Activated CD8-positive, alpha-beta T cell treated with anti-CD3 and anti-CD28 coated beads, Interleukin-2, amount 10 ng/mL, durations not matched to agents 7 days and 5 days (primary cell): ENCODE measurements at regions of chr22 and their contacts with region 1.

Region 1: GRCh38 chr22:35921777-35922176 is 106.8 kb downstream of the RBFOX2 start:
- DNase-seq: peak; percentile 59
- ATAC-seq: peak; percentile 69
- H3K4me3 Mint-ChIP-seq: no peak overlapping the region
- H3K27ac Mint-ChIP-seq: no peak overlapping the region
- H3K4me1 Mint-ChIP-seq: peaks cover 3% of the 10 kb centered on the region
- H3K27me3 Mint-ChIP-seq: peaks cover 8% of the 10 kb centered on the region

Region 2: GRCh38 chr22:35627264-35628041 is 294.3 kb before region 1 on chr22:
- CTCF ChIA-PET with region 1: interaction called, 13 read pairs
- POLR2A ChIA-PET with region 1: no interaction called
- DNase-seq: peak; percentile 66
- ATAC-seq: peak; percentile 48
- H3K4me3 Mint-ChIP-seq: peak overlapping the region; percentile 74
- H3K27ac Mint-ChIP-seq: peak overlapping the region; percentile 53
- H3K4me1 Mint-ChIP-seq: peaks cover 25% of the 10 kb centered on the region
- H3K27me3 Mint-ChIP-seq: peaks cover 8% of the 10 kb centered on the region

Region 3: GRCh38 chr22:36010882-36011281 is 89.1 kb after region 1 on chr22:
- CTCF ChIA-PET with region 1: no interaction called
- POLR2A ChIA-PET with region 1: no interaction called
- DNase-seq: no peak
- ATAC-seq: no peak
- H3K4me3 Mint-ChIP-seq: no peak overlapping the region
- H3K27ac Mint-ChIP-seq: no peak overlapping the region
- H3K4me1 Mint-ChIP-seq: no peaks in the 10 kb centered on the region
- H3K27me3 Mint-ChIP-seq: peaks cover 9% of the 10 kb centered on the region

Region 4: GRCh38 chr22:36055376-36056295 is 133.9 kb after region 1 on chr22:
- CTCF ChIA-PET with region 1: no interaction called
- POLR2A ChIA-PET with region 1: no interaction called
- DNase-seq: no peak
- ATAC-seq: no peak
- H3K4me3 Mint-ChIP-seq: no peak overlapping the region
- H3K27ac Mint-ChIP-seq: no peak overlapping the region
- H3K4me1 Mint-ChIP-seq: peaks cover 10% of the 10 kb centered on the region
- H3K27me3 Mint-ChIP-seq: peaks cover 7% of the 10 kb centered on the region